GM13976 (cell line): ENCODE measurements at regions of chrX and their contacts with region 1.

Region 1: GRCh38 chrX:119729408-119730201 is 28.8 kb upstream of the SOWAHD start:
- DNase-seq: peak; percentile 65
- CTCF ChIP-seq: peak; percentile 66

Region 2: GRCh38 chrX:118770133-118770760 is 959.4 kb before region 1 on chrX:
- in situ Hi-C with region 1: no loop called
- DNase-seq: no peak
- CTCF ChIP-seq: no peak

Region 3: DNA sequence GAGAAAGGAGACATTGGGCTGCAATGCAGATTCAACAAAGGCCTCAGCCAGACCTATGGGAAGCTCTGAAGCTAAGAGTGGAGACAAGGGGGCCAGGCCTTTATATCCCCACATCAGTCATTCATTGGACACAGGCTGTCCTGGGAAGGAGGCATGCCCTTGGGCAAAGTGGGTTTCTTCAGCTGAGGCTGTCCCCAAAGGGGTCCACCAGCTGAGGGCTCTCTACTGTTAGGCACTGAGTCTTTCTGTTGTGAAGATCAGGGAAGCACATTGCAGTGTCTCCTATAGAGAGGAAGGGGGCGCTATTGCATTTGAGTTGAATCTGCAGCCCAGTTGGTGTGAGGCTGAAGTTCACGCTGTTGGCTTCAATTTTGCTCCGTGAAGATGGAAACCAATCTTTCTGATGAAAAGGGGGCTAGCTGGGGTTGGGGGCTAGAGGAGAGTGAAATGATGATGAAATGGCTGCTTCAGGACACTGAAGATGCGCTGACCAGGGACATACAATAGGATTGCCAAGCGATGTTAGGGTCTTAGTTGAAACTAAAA is 213.4 kb before region 1 on chrX:
- in situ Hi-C with region 1: loop called (anchors 25 kb)
- DNase-seq: peak; percentile 81
- CTCF ChIP-seq: peak; percentile 86

Region 4: DNA sequence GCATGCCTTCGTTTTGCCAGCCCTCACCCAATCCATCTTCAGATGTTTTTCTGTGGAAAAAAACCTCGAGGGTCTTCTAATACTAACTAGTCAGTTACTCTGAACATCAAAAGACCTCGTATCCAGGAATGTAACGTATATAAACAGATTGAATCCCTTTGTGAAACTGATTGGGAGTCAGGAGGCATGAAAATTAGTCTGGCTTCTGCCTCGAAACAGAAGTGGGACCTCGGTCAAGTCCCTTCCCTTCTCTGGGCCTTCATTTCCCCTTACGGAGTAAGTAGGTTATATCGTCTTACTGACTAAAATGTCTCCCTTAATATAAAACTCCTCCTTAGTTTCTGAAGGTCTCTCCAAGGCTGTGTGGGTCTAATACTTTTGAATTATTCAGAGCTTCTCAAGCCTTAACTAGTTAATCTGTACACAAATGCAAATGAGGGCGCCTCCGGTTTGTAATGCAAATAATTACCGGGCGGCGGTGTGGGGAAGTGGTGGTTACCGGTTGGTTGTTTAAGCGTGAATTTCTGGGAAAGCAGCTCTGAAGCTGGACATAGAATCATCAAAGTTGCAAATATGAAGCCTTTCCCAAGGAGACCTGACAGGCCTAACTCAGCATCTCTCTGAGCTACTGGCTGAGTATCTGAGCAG is 112.0 kb before region 1 on chrX:
- in situ Hi-C with region 1: loop called (anchors 10 kb)
- DNase-seq: no peak
- CTCF ChIP-seq: no peak